GM18951 (cell line): ENCODE measurements at regions of chr17 and their contacts with region 1.

Region 1: DNA sequence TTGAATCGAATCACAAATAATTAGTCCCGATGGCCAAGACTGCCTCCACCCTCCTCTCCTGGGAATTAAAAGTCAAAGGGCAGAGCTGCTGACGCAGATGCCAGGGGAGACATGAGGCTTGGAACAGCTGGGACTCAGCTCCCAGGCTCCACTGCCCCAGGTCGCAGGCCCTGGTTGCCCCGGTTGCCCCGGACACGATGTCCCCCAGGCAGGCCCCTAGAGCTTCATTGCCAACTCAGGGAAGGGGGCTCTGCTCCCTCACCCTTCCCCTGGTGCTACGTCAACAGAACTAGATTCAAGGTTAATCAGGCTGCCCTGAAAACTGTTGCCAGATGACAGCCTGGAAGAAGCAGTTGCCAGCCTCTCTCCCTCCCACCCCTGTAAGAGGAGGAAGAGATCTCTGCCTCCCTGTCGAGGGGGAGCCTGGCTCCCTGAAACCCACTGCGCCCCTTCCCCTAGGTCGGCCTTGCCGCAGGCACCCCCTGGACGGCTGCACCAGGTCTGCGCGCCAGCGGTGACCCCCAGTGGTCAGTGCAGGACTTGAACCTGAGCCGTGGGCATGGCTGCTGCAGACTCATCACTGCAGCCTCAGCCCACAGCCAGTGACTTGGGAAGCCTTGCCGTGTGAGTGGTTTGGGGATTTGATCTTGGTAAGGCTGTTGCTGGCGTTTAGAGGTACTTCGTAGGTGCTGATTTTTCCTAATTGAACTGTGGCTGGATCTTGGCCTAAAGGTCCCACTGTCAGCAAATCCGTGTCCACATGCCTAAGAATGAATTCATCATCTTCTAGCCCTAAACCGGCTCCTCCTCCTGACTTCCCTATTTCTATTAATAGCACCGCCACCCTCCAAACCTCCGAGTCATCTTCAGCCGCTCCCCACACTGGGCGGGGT is 84.1 kb upstream of the TOB1 start:
- POLR2A ChIP-seq: no peak

Region 2: GRCh38 chr17:50783193-50783660 is 167.0 kb before region 1 on chr17:
- in situ Hi-C with region 1: loop called (anchors 10 kb)
- POLR2A ChIP-seq: no peak

Region 3: DNA sequence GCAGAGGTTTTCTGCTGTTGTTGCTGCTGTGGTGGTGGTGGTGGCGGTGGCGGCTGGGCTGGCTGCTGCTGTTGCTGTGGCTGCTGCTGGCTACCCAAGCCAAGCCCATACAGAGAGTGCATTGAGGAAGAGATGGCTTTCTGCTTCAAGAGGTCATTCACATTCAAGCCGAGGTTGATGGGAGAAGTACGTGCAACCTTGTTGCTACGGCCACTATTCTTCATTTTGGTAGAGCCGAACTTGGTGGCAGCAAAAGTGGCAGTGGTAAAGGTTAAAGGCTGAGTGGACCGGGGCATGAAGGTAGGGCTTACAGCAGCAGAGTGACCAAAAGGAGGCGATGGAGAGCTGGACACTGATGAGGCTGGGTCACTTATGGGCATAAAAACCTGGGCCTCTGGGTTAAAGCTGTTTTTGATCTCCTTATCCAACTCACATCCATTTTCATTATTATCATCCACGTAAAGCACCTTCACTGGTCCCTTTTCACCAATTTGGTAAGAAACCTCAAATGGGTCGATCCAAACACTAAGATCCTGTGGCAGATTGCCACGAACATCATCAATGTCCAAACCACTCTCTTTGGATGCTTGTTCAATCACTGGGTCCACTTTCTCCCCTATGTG is 86.9 kb before region 1 on chr17:
- in situ Hi-C with region 1: loop called (anchors 5 kb)
- POLR2A ChIP-seq: no peak

Region 4: GRCh38 chr17:51362818-51363585 is 412.8 kb after region 1 on chr17:
- in situ Hi-C with region 1: no loop called
- POLR2A ChIP-seq: no peak